CD14-positive monocyte (primary cell): ENCODE measurements at regions of chr14 and their contacts with region 1.

Region 1: DNA sequence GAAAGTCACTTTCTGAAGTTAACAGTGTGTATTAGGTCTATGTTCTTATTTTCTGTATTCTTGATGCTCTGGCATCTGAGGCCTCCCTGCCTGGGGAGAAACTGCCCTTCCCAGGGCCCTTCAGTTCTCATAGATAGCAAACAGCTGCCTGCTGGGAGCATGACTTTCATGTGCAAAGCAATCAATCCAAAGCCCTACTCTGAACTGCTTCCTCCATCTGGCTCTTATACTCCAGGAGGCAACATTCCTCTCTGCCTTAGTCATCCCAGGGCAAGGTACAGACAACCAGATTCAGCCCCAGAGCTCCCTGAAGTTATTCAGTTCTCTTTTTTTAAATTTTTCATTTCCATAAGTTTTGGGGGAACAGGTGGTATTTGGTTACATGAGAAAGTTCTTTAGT is 41.7 kb upstream of the RIN3 start:
- DNase-seq: peak in 2 of 3 donors; percentile 47 to 57
- H3K4me3 ChIP-seq: peak overlapping the region in 1 of 3 experiments; percentile 14
- H3K4me3 Mint-ChIP-seq: peak overlapping the region in 1 of 2 donors; percentile 65
- H3K27ac ChIP-seq: peak overlapping the region; percentile 24 to 92
- H3K27ac Mint-ChIP-seq: peak overlapping the region; percentile 61 to 98 (median 86)
- H3K4me1 ChIP-seq: peaks cover 64 to 73% of the 10 kb centered on the region in 2 donors
- H3K4me1 Mint-ChIP-seq: peaks cover 72% of the 10 kb centered on the region
- H3K27me3 ChIP-seq: no peaks in the 10 kb centered on the region
- H3K27me3 Mint-ChIP-seq: no peaks in the 10 kb centered on the region
- CTCF ChIP-seq: no peak

Region 2: GRCh38 chr14:92199763-92200162 is 272.2 kb before region 1 on chr14:
- intact Hi-C with region 1: no loop called
- DNase-seq: no peak
- H3K4me3 ChIP-seq: no peak overlapping the region
- H3K4me3 Mint-ChIP-seq: peak overlapping the region in 1 of 2 donors; percentile 8
- H3K27ac ChIP-seq: no peak overlapping the region
- H3K27ac Mint-ChIP-seq: no peak overlapping the region
- H3K4me1 ChIP-seq: peaks cover 7 to 11% of the 10 kb centered on the region in 2 donors
- H3K4me1 Mint-ChIP-seq: peaks cover 33% of the 10 kb centered on the region
- H3K27me3 ChIP-seq: peaks cover 0 to 13% of the 10 kb centered on the region in 2 donors
- H3K27me3 Mint-ChIP-seq: peaks cover 11 to 28% (median 16%) of the 10 kb centered on the region in 3 donors
- CTCF ChIP-seq: no peak

Region 3: DNA sequence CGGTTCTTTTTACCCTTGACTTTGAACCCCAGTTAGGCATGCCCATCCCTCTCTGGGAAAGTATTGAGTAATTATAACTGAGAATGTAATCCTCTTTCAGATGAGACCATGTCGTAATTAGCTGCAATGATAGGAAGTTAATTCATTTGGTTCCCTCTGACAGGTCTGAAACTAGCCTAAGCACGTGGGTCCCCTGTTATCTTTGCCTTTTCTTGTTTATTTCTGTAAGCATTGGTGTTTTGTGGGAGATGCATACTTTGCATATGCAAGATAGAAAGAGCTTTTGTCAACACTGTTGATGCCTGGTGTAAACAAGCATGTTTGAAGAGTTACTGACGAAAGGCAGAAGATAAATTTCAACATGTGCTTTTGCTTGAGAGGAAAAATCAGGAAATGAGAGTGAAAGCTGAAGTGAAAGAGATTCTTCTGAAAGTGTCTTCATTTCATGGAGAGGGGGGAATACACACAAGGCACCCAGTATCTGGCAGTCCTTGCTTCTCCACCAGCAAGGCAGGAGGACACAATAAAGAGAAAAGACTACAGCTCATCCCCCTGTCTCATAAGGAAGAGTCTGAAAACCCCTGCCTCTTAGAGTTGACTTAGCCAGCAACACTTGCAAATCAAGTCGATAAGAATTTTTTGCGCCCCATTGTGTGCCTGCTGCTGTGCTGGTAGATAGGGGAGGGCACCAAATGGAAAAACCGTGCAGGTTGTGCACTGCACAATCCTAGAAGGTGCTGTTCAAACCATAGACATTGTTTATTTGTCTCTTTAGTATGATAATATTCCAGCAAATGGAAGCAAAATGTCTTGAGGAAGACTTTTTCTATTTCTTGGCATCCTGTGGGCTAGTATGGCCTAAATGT is 71.1 kb before region 1 on chr14:
- intact Hi-C with region 1: loop called in 1 of 2 experiments (anchors 5 kb)
- DNase-seq: peak; percentile 75 to 90 (median 86)
- H3K4me3 ChIP-seq: peak overlapping the region in 1 of 3 experiments; percentile 43
- H3K4me3 Mint-ChIP-seq: peak overlapping the region; percentile 32 to 43
- H3K27ac ChIP-seq: peak overlapping the region; percentile 77 to 85
- H3K27ac Mint-ChIP-seq: peak overlapping the region; percentile 92 to 98 (median 94)
- H3K4me1 ChIP-seq: peaks cover 99% of the 10 kb centered on the region in 2 donors
- H3K4me1 Mint-ChIP-seq: peaks cover 95% of the 10 kb centered on the region
- H3K27me3 ChIP-seq: no peaks in the 10 kb centered on the region
- H3K27me3 Mint-ChIP-seq: peaks cover 0 to 1% (median 0%) of the 10 kb centered on the region in 3 donors
- CTCF ChIP-seq: no peak

Region 4: GRCh38 chr14:92492258-92492657 is 20.3 kb after region 1 on chr14:
- intact Hi-C with region 1: loop called in 1 of 2 experiments (anchors 2 kb)
- DNase-seq: peak; percentile 91 to 97 (median 96)
- H3K4me3 ChIP-seq: peak overlapping the region in 1 of 3 experiments; percentile 30
- H3K4me3 Mint-ChIP-seq: peak overlapping the region in 1 of 2 donors; percentile 73
- H3K27ac ChIP-seq: peak overlapping the region; percentile 90 to 97
- H3K27ac Mint-ChIP-seq: peak overlapping the region; percentile 96 to 99 (median 98)
- H3K4me1 ChIP-seq: peaks cover 89 to 100% of the 10 kb centered on the region in 2 donors
- H3K4me1 Mint-ChIP-seq: peaks cover 94% of the 10 kb centered on the region
- H3K27me3 ChIP-seq: no peaks in the 10 kb centered on the region
- H3K27me3 Mint-ChIP-seq: peaks cover 0 to 5% (median 0%) of the 10 kb centered on the region in 3 donors
- CTCF ChIP-seq: peak; percentile 35

Region 5: GRCh38 chr14:92507174-92507768 is 35.4 kb after region 1 on chr14:
- intact Hi-C with region 1: loop called (anchors 5 to 10 kb)
- DNase-seq: peak; percentile 70 to 89 (median 87)
- H3K4me3 ChIP-seq: peak overlapping the region in 1 of 3 experiments; percentile 59
- H3K4me3 Mint-ChIP-seq: peak overlapping the region in 1 of 2 donors; percentile 61
- H3K27ac ChIP-seq: peak overlapping the region; percentile 80 to 88
- H3K27ac Mint-ChIP-seq: peak overlapping the region; percentile 86 to 97 (median 93)
- H3K4me1 ChIP-seq: peaks cover 54 to 77% of the 10 kb centered on the region in 2 donors
- H3K4me1 Mint-ChIP-seq: peaks cover 72% of the 10 kb centered on the region
- H3K27me3 ChIP-seq: peaks cover 0 to 6% of the 10 kb centered on the region in 2 donors
- H3K27me3 Mint-ChIP-seq: peaks cover 12 to 31% (median 25%) of the 10 kb centered on the region in 3 donors
- CTCF ChIP-seq: no peak